Pancreas (tissue), 10 donors: ENCODE measurements at regions of chr16 and their contacts with region 1.

Region 1: DNA sequence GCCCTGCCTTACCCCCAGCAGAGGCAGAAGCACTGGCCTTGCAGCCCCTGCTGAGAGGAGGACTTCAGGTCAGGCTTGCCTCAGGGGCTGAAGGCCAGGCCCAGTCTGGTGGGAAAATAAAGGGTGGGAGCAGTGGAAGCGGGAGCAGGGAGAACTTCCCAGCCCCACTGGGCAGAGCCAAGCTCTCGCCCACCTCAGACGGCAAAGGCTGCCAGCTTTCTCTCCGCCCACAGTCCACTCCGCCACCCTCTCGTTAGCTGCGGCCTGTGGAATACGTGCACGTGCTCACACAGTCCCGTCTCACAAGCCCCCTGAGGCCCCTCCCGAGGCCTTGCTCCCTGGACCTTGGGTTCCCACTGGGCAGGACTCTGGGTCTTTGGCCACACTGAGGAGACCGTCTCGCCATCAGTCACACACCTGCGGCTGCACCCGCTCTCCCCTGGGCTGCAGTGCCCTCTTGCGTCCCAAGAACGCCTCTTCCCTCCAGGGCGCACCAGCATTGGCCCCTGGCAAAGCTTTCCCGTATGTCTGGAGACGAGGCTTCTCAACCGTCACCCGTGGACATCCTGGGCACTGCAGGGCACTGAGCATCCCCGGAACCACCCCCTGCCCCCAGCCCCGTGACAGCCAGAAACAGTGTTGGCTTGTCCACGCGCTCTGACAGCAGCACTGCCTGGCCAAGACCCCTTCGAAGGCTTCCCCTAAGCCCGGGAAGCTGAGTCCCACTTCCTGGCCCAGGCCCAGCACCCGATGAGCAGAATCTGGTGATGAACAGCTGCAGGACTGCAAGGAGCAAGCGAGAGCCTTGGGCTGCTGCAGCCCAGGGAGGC is 8.3 kb downstream of the MRPL28 start:
- DNase-seq: peak; percentile 69 to 95 (median 84)
- ATAC-seq: peak; percentile 87 to 96 (median 93)
- H3K4me3 ChIP-seq: no peak overlapping the region
- H3K27ac ChIP-seq: no peak overlapping the region
- H3K4me1 ChIP-seq: no peaks in the 10 kb centered on the region
- H3K27me3 ChIP-seq: no peaks in the 10 kb centered on the region
- CTCF ChIP-seq: peak; percentile 61 to 77 (median 69)

Region 2: GRCh38 chr16:106623-107324 is 255.3 kb before region 1 on chr16:
- intact Hi-C with region 1: loop called in 1 of 3 experiments (anchors 5 kb)
- DNase-seq: peak in 3 of 6 donors; percentile 45 to 64 (median 57)
- ATAC-seq: peak; percentile 68 to 88 (median 85)
- H3K4me3 ChIP-seq: no peak overlapping the region
- H3K27ac ChIP-seq: no peak overlapping the region
- H3K4me1 ChIP-seq: no peaks in the 10 kb centered on the region
- H3K27me3 ChIP-seq: no peaks in the 10 kb centered on the region
- CTCF ChIP-seq: peak; percentile 66 to 78 (median 73)

Region 3: GRCh38 chr16:303760-304505 is 58.2 kb before region 1 on chr16:
- intact Hi-C with region 1: no loop called
- DNase-seq: no peak
- ATAC-seq: no peak
- H3K4me3 ChIP-seq: no peak overlapping the region
- H3K27ac ChIP-seq: no peak overlapping the region
- H3K4me1 ChIP-seq: no peaks in the 10 kb centered on the region
- H3K27me3 ChIP-seq: no peaks in the 10 kb centered on the region
- CTCF ChIP-seq: no peak